ENCODE measurements at regions of chr15 and their contacts with region 1.

Region 1: GRCh38 chr15:84748274-84749110 is at the start of gene ZNF592:
- DNase-seq: peak; percentile 79
- ATAC-seq: peak; percentile 66
- H3K4me3 ChIP-seq: peak within 1 kb of the TSS; percentile 96
- H3K27ac ChIP-seq: peak within 1 kb of the TSS; percentile 88
- H3K4me1 ChIP-seq: peaks cover 37% of the 10 kb centered on the region
- H3K27me3 ChIP-seq: no peaks in the 10 kb centered on the region
- CTCF ChIP-seq: no peak
- total RNA-seq, gene ZNF592: 12.3 and 13.0 TPM in 2 replicates

Region 2: DNA sequence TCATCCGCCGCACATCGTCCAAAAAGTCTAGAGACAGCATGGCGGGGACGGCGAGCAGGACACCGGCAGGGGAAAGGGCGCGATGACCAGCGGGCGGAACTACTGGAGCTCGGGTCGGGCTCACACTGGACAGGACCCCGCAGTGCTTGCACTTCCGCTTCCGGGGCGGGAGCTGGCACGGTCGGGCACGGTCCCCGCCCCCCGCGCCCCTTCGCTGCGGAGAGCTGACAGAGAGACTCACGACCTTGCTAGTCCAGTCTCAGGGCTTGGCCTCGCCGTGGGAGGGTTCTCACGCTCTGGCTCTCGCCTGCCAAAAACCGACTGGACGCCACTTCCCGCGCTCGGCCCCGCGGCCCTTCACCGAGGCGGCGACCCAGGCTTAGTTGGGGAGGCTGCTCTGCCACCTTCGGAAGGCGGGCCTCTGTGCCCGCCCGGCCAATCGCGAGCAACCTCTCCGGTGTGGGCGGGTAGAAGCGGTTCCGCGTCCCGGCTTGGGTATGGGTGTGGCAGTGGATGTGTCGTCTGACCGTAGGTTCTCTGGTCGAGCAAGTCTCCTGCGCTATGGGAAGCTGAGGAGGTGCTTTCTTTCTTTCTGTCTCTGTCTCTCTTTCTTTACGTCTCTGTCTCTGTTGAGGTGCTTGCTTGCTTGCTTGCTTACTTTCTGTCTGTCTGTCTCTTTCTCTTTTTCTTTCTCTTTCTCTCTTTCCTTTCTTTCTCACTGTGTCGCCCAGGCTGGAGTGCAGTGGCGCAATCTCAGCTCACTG is 32.3 kb before region 1 on chr15 and contains the start of gene SEC11A:
- CTCF ChIA-PET with region 1: no interaction called
- POLR2A ChIA-PET with region 1: interaction called, 4 read pairs
- intact Hi-C with region 1: loop called (anchors 2 kb)
- DNase-seq: peak; percentile 96
- ATAC-seq: peak; percentile 95
- H3K4me3 ChIP-seq: peak within 1 kb of the TSS; percentile 81
- H3K27ac ChIP-seq: peak within 1 kb of the TSS; percentile 83
- H3K4me1 ChIP-seq: peaks cover 16% of the 10 kb centered on the region
- H3K27me3 ChIP-seq: no peaks in the 10 kb centered on the region
- CTCF ChIP-seq: no peak
- total RNA-seq, gene SEC11A: 120 and 140 TPM in 2 replicates

Region 3: GRCh38 chr15:84734794-84735479 is 13.6 kb before region 1 on chr15:
- CTCF ChIA-PET with region 1: interaction called, 11 read pairs
- POLR2A ChIA-PET with region 1: interaction called, 11 read pairs
- intact Hi-C with region 1: no loop called
- DNase-seq: peak; percentile 88
- ATAC-seq: peak; percentile 84
- H3K4me3 ChIP-seq: peak overlapping the region; percentile 55; the same call in 1 of the 2 replicates
- H3K27ac ChIP-seq: peak overlapping the region; percentile 91
- H3K4me1 ChIP-seq: peaks cover 24% of the 10 kb centered on the region
- H3K27me3 ChIP-seq: no peaks in the 10 kb centered on the region
- CTCF ChIP-seq: no peak

Region 4: GRCh38 chr15:84929744-84930371 is 181.4 kb after region 1 on chr15:
- CTCF ChIA-PET with region 1: no interaction called
- POLR2A ChIA-PET with region 1: no interaction called
- intact Hi-C with region 1: loop called (anchors 2 kb)
- DNase-seq: peak; percentile 99
- ATAC-seq: peak; percentile 88
- H3K4me3 ChIP-seq: no peak overlapping the region
- H3K27ac ChIP-seq: peak overlapping the region; percentile 87
- H3K4me1 ChIP-seq: peaks cover 42% of the 10 kb centered on the region
- H3K27me3 ChIP-seq: no peaks in the 10 kb centered on the region
- CTCF ChIP-seq: no peak

Measured in PC-3 (cell line).